ENCODE measurements at regions of chr19 and their contacts with region 1.

Region 1: DNA sequence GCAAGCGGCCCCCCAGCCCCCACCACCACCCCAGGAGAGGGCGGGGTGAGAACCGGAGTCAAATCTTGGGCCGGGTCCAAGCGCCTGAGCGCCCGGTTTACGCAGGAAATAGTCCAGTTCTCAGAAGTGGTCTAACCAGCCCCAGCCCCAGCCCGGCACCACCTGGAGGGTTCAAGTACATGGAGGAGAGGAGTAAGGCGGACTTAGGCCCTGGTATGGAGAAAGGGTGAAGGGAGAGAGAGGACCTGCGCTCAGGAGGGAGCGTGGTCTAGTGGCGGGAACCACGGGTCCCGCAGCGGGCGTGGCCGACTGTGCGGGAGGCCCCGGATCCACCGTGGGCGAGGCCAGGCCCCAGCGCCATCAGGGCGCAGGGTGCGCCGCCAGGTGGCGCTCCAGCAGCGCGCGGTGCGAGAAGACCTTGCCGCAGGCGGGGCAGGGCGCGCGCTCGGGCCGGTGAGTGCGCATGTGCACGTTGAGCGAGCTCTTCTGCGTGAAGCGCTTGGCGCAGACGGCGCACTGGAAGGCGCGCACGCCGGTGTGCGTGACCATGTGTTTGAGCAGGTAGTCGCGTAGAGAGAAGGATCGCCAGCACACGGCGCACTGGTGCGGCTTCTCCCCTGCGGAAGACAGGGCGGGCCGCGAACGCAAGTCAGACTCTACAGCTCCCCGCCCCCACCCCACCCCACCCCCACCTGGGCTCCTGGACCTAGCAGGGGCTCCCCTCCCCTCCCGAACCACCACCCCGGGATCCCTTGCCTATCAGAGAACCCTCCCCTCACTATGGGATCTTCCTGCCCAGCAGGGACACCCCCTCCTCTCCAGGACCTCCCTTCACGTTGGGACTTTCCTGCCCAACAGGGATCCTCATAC is 2.1 kb upstream of the SLC27A5 start:
- DNase-seq: peak; percentile 95
- H3K4me3 Mint-ChIP-seq: peak overlapping the region; percentile 88
- H3K27ac Mint-ChIP-seq: peak overlapping the region; percentile 91
- H3K4me1 Mint-ChIP-seq: peaks cover 26% of the 10 kb centered on the region
- H3K27me3 Mint-ChIP-seq: no peaks in the 10 kb centered on the region

Region 2: GRCh38 chr19:58499021-58499927 is 14.7 kb before region 1 on chr19:
- intact Hi-C with region 1: loop called (anchors 1 kb)
- DNase-seq: peak; percentile 96
- H3K4me3 Mint-ChIP-seq: peak overlapping the region; percentile 99
- H3K27ac Mint-ChIP-seq: peak overlapping the region; percentile 97
- H3K4me1 Mint-ChIP-seq: peaks cover 21% of the 10 kb centered on the region
- H3K27me3 Mint-ChIP-seq: no peaks in the 10 kb centered on the region

Measured in activated T-helper 2 cell treated with anti-CD3 and anti-CD28 coated beads, Interferon-gamma antibody, Interleukin-2, Interleukin-4, amounts not matched to agents 10 μg/mL and 5 μg/mL and 100 μg/mL, durations not matched to agents 14 hours and 24 hours and 36 hours (primary cell).